ENCODE measurements at regions of chr5 and their contacts with region 1.

Region 1: GRCh38 chr5:1140171-1140817 is 28.4 kb upstream of the SLC12A7 start:
- DNase-seq: peak; percentile 90
- ATAC-seq: peak; percentile 90
- H3K4me3 Mint-ChIP-seq: no peak overlapping the region
- H3K27ac Mint-ChIP-seq: no peak overlapping the region
- H3K4me1 Mint-ChIP-seq: peaks cover 2% of the 10 kb centered on the region
- H3K27me3 Mint-ChIP-seq: peaks cover 5% of the 10 kb centered on the region

Region 2: DNA sequence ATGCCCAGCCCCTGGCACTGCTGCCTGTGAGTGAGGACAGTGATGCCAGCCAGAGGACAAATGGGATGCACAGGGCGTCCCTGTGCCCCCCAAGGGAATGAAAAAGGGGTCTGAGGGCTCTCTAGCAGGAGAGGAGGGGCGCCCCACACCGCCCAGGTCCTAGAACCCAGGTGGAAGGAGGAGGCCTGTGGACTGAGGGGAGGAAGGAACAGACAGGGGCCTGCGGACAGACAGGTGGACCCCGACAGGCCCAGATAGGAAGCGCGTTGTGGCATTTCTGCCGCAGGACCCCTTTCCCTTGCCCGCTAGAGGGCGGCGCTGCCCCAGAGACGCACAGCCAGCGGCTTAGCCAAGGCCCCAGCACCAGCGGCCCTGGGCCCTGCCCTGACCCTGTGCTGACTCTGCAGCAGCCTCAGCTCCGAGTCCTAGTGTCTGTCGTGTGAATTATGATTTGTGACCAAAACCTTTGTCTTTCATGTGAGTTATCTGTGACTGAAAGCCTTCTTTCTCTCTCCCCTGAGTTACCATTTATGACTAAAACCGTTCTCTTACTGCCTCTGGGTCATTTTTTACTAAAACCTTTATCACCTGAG is 216.9 kb before region 1 on chr5:
- CTCF ChIA-PET with region 1: interaction called, 5 read pairs
- POLR2A ChIA-PET with region 1: no interaction called
- intact Hi-C with region 1: loop called (anchors 1 kb)
- DNase-seq: peak; percentile 87
- ATAC-seq: peak; percentile 88
- H3K4me3 Mint-ChIP-seq: no peak overlapping the region
- H3K27ac Mint-ChIP-seq: no peak overlapping the region
- H3K4me1 Mint-ChIP-seq: peaks cover 26% of the 10 kb centered on the region
- H3K27me3 Mint-ChIP-seq: peaks cover 25% of the 10 kb centered on the region

Region 3: GRCh38 chr5:997001-997474 is 143.3 kb before region 1 on chr5:
- CTCF ChIA-PET with region 1: no interaction called
- POLR2A ChIA-PET with region 1: no interaction called
- intact Hi-C with region 1: loop called in 1 of 2 experiments (anchors 5 kb)
- DNase-seq: peak; percentile 54
- ATAC-seq: peak; percentile 77
- H3K4me3 Mint-ChIP-seq: peak overlapping the region; percentile 35
- H3K27ac Mint-ChIP-seq: no peak overlapping the region
- H3K4me1 Mint-ChIP-seq: peaks cover 11% of the 10 kb centered on the region
- H3K27me3 Mint-ChIP-seq: no peaks in the 10 kb centered on the region

Region 4: DNA sequence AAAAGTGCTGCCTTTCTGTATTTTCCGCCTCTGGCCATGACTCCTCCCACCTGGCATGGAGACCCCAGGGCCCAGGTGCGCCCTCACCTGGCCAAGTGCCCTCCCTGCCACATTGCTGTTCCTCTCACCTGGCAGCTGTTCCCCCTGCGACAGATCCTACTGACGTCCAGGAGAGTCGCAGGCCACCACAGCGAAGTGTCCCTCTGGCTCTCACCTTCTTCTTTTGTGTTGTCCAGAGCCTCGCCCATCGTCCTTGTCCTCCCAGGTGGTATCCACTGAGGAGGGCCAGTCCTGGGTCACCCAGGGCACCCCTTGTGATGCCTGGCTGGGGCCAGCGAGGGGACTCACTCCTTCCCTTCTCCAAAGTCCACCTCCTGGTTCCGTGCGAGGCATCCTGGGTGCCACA is 129.1 kb before region 1 on chr5:
- CTCF ChIA-PET with region 1: interaction called, 3 read pairs
- POLR2A ChIA-PET with region 1: no interaction called
- intact Hi-C with region 1: loop called in 1 of 2 experiments (anchors 5 kb)
- DNase-seq: peak; percentile 80
- ATAC-seq: peak; percentile 64
- H3K4me3 Mint-ChIP-seq: no peak overlapping the region
- H3K27ac Mint-ChIP-seq: no peak overlapping the region
- H3K4me1 Mint-ChIP-seq: peaks cover 3% of the 10 kb centered on the region
- H3K27me3 Mint-ChIP-seq: peaks cover 39% of the 10 kb centered on the region

Region 5: DNA sequence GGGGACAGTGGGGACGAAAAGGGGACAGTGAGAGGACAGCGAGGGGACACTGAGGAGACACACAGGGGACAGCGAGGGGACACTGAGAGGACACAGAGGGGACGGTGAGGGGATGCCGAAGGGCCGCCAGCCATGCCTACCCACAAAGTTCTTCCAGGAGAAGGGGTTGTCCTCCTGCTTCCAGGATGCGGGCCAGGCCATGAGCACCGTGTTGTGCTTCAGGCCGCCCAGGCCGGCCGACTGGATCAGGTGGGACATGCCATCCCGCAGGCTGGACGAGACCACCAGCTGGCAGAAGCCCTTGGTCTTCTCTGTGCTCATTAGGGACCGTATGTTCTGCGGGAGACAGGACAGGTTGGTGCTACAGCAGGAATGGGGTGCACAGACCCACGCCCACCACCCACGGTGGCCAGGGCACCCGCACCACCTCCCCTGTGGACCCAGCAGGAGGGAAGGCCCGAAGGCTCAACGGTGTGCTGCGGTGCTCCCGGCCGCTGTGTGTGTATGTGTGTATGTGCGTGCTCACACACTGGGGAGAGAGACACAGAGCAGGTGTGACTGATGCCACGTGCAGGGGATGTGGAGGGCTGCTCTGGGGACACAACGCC is 75.0 kb before region 1 on chr5:
- CTCF ChIA-PET with region 1: no interaction called
- POLR2A ChIA-PET with region 1: no interaction called
- intact Hi-C with region 1: no loop called
- DNase-seq: no peak
- ATAC-seq: no peak
- H3K4me3 Mint-ChIP-seq: no peak overlapping the region
- H3K27ac Mint-ChIP-seq: no peak overlapping the region
- H3K4me1 Mint-ChIP-seq: no peaks in the 10 kb centered on the region
- H3K27me3 Mint-ChIP-seq: no peaks in the 10 kb centered on the region

Region 6: GRCh38 chr5:1105350-1106265 is 34.7 kb before region 1 on chr5:
- CTCF ChIA-PET with region 1: interaction called, 3 read pairs
- POLR2A ChIA-PET with region 1: no interaction called
- intact Hi-C with region 1: loop called in 1 of 2 experiments (anchors 2 kb)
- DNase-seq: peak; percentile 79
- ATAC-seq: peak; percentile 60
- H3K4me3 Mint-ChIP-seq: peak overlapping the region; percentile 8
- H3K27ac Mint-ChIP-seq: peak overlapping the region; percentile 83
- H3K4me1 Mint-ChIP-seq: peaks cover 76% of the 10 kb centered on the region
- H3K27me3 Mint-ChIP-seq: no peaks in the 10 kb centered on the region

Region 7: DNA sequence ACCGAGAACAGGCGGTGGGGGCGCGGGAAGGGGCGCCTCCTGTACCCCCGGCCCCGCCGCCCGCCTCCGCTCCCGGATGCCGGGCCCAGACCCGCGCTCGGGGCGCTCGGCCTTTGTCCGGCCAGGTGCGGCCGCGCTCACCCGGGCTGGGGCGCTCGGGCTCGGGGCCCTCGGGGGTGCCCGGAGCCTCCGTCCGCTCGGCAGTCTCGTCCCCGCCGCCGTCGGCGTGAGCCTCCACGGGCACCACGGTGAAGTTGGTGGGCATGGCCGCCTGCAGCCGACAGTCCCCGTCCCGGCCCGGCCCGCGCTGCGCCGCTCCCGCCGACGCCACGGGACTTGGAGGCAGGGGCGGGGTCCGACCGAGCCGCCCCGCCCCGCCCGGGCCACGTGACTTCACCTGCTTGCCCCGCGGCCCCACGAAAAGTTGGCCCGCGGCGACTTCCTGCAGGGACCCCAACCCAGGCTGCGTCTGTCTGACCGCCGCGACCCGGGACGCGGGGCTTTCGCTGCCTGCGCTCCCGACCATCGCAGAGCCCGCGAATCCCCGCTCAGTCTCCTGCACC is 28.5 kb before region 1 on chr5 and contains the start of gene SLC12A7:
- CTCF ChIA-PET with region 1: no interaction called
- POLR2A ChIA-PET with region 1: no interaction called
- intact Hi-C with region 1: loop called in 1 of 2 experiments (anchors 1 kb)
- DNase-seq: peak; percentile 84
- ATAC-seq: peak; percentile 76
- H3K4me3 Mint-ChIP-seq: peak within 1 kb of the TSS; percentile 82
- H3K27ac Mint-ChIP-seq: peak within 1 kb of the TSS; percentile 75
- H3K4me1 Mint-ChIP-seq: peaks cover 33% of the 10 kb centered on the region
- H3K27me3 Mint-ChIP-seq: no peaks in the 10 kb centered on the region
- total RNA-seq, gene SLC12A7: 18.5 to 21.6 TPM